ENCODE measurements at regions of chr5 and their contacts with region 1.

Region 1: DNA sequence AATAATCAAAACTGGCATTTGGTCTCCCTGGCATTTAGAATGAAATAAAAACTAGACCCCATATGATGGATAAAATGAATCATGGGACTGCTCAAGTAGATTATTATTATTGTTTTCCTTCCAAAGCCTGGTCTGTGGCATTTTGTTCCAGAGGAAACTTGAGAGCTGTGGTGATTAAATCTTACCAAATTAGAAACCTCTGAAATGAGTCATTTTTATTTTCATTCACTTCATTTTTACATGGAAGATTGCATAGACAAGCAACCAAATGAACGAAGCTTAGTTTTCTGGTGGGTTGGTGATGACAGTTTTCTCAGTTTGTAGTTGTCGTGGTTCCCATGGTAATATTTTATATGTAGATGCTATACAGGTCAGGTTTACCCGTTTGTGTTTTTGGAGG is 23.4 kb downstream of the PAM start:
- DNase-seq: no peak
- H3K4me3 ChIP-seq: no peak overlapping the region
- H3K4me3 Mint-ChIP-seq: no peak overlapping the region
- H3K27ac ChIP-seq: no peak overlapping the region
- H3K27ac Mint-ChIP-seq: no peak overlapping the region
- H3K4me1 ChIP-seq: peaks cover 10% of the 10 kb centered on the region
- H3K4me1 Mint-ChIP-seq: peaks cover 17 to 32% (median 23%) of the 10 kb centered on the region in 4 donors
- H3K27me3 ChIP-seq: no peaks in the 10 kb centered on the region
- H3K27me3 Mint-ChIP-seq: no peaks in the 10 kb centered on the region

Region 2: GRCh38 chr5:102722930-102723329 is 55.5 kb before region 1 on chr5:
- CTCF ChIA-PET with region 1: no interaction called
- POLR2A ChIA-PET with region 1: no interaction called
- intact Hi-C with region 1: no loop called
- DNase-seq: no peak
- H3K4me3 ChIP-seq: no peak overlapping the region
- H3K4me3 Mint-ChIP-seq: no peak overlapping the region
- H3K27ac ChIP-seq: no peak overlapping the region
- H3K27ac Mint-ChIP-seq: no peak overlapping the region
- H3K4me1 ChIP-seq: no peaks in the 10 kb centered on the region
- H3K4me1 Mint-ChIP-seq: no peaks in the 10 kb centered on the region
- H3K27me3 ChIP-seq: no peaks in the 10 kb centered on the region
- H3K27me3 Mint-ChIP-seq: peaks cover 9 to 15% of the 10 kb centered on the region in 2 donors

Region 3: GRCh38 chr5:102762095-102762534 is 16.4 kb before region 1 on chr5:
- CTCF ChIA-PET with region 1: interaction called, 30 read pairs
- POLR2A ChIA-PET with region 1: interaction called, 4 read pairs
- intact Hi-C with region 1: loop called (anchors 1 kb)
- DNase-seq: no peak
- H3K4me3 ChIP-seq: peak overlapping the region in 1 of 2 donors; percentile 3
- H3K4me3 Mint-ChIP-seq: peak overlapping the region; percentile 64 to 86 (median 78)
- H3K27ac ChIP-seq: peak overlapping the region; percentile 47
- H3K27ac Mint-ChIP-seq: peak overlapping the region; percentile 45 to 87 (median 58)
- H3K4me1 ChIP-seq: peaks cover 65% of the 10 kb centered on the region
- H3K4me1 Mint-ChIP-seq: peaks cover 62 to 76% (median 71%) of the 10 kb centered on the region in 4 donors
- H3K27me3 ChIP-seq: no peaks in the 10 kb centered on the region
- H3K27me3 Mint-ChIP-seq: no peaks in the 10 kb centered on the region

Region 4: GRCh38 chr5:102792705-102793104 is 14.2 kb after region 1 on chr5:
- CTCF ChIA-PET with region 1: interaction called, 18 read pairs
- POLR2A ChIA-PET with region 1: no interaction called
- intact Hi-C with region 1: no loop called
- DNase-seq: peak in 1 of 5 donors; percentile 4
- H3K4me3 ChIP-seq: no peak overlapping the region
- H3K4me3 Mint-ChIP-seq: no peak overlapping the region
- H3K27ac ChIP-seq: no peak overlapping the region
- H3K27ac Mint-ChIP-seq: no peak overlapping the region
- H3K4me1 ChIP-seq: no peaks in the 10 kb centered on the region
- H3K4me1 Mint-ChIP-seq: peaks cover 4 to 13% (median 9%) of the 10 kb centered on the region in 4 donors
- H3K27me3 ChIP-seq: no peaks in the 10 kb centered on the region
- H3K27me3 Mint-ChIP-seq: no peaks in the 10 kb centered on the region

Region 5: GRCh38 chr5:102971697-102972293 is 193.3 kb after region 1 on chr5:
- CTCF ChIA-PET with region 1: interaction called, 4 read pairs
- POLR2A ChIA-PET with region 1: no interaction called
- intact Hi-C with region 1: loop called (anchors 1 kb)
- DNase-seq: no peak
- H3K4me3 ChIP-seq: no peak overlapping the region
- H3K4me3 Mint-ChIP-seq: no peak overlapping the region
- H3K27ac ChIP-seq: no peak overlapping the region
- H3K27ac Mint-ChIP-seq: no peak overlapping the region
- H3K4me1 ChIP-seq: no peaks in the 10 kb centered on the region
- H3K4me1 Mint-ChIP-seq: peaks cover 0 to 1% (median 0%) of the 10 kb centered on the region in 4 donors
- H3K27me3 ChIP-seq: no peaks in the 10 kb centered on the region
- H3K27me3 Mint-ChIP-seq: no peaks in the 10 kb centered on the region

Region 6: GRCh38 chr5:103041071-103041676 is 262.7 kb after region 1 on chr5:
- CTCF ChIA-PET with region 1: no interaction called
- POLR2A ChIA-PET with region 1: no interaction called
- intact Hi-C with region 1: loop called (anchors 5 kb)
- DNase-seq: peak in 1 of 5 donors; percentile 9
- H3K4me3 ChIP-seq: no peak overlapping the region
- H3K4me3 Mint-ChIP-seq: no peak overlapping the region
- H3K27ac ChIP-seq: no peak overlapping the region
- H3K27ac Mint-ChIP-seq: no peak overlapping the region
- H3K4me1 ChIP-seq: no peaks in the 10 kb centered on the region
- H3K4me1 Mint-ChIP-seq: no peaks in the 10 kb centered on the region
- H3K27me3 ChIP-seq: no peaks in the 10 kb centered on the region
- H3K27me3 Mint-ChIP-seq: peaks cover 3 to 4% of the 10 kb centered on the region in 2 donors